ENCODE measurements at regions of chr16 and their contacts with region 1.

Region 1: GRCh38 chr16:57316390-57317017 is 32.0 kb upstream of the PLLP start:
- DNase-seq: peak; percentile 60 to 90
- H3K4me3 ChIP-seq: no peak overlapping the region
- H3K27ac ChIP-seq: peak overlapping the region; percentile 91 to 96
- H3K4me1 ChIP-seq: peaks cover 21 to 41% of the 10 kb centered on the region in 2 donors
- H3K27me3 ChIP-seq: no peaks in the 10 kb centered on the region
- CTCF ChIP-seq: no peak

Region 2: DNA sequence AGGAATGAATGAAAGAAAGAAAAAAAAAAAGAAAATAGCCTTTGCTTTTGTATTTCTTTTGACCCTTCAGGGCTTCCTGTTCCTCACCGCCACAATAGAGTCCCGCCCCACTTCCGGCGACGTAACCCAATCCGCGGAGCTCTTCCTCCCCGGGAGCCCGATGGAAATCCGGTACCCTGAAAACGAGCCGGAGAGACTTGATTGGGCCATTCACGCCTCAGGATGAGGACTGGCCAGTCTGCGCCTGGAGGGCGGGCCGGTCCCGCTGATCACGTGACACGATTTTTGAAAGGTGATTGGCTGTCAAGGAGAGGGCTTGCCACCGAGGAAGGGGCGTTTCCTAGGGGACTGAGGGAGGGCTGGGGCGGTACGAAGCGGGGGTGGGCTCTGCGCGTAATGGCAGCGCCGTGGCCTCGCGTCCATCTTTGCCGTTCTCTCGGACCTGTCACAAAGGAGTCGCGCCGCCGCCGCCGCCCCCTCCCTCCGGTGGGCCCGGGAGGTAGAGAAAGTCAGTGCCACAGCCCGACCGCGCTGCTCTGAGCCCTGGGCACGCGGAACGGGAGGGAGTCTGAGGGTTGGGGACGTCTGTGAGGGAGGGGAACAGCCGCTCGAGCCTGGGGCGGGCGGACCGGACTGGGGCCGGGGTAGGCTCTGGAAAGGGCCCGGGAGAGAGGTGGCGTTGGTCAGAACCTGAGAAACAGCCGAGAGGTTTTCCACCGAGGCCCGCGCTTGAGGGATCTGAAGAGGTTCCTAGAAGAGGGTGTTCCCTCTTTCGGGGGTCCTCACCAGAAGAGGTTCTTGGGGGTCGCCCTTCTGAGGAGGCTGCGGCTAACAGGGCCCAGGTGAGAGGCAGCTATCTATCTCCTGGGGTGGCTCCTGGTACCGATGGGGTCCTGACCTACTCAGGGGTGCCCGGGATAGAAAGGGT is 130.3 kb before region 1 on chr16 and contains the starts of genes PSME3IP1 and RSPRY1:
- intact Hi-C with region 1: no loop called
- DNase-seq: peak; percentile 98 to 99
- H3K4me3 ChIP-seq: peak within 1 kb of the TSS; percentile 78 to 94
- H3K27ac ChIP-seq: peak within 1 kb of the TSS; percentile 95 to 96
- H3K4me1 ChIP-seq: peaks cover 5 to 33% of the 10 kb centered on the region in 2 donors
- H3K27me3 ChIP-seq: no peaks in the 10 kb centered on the region
- CTCF ChIP-seq: no peak
- total RNA-seq, gene PSME3IP1: 32.6 TPM
- total RNA-seq, gene RSPRY1: 29.3 TPM

Region 3: DNA sequence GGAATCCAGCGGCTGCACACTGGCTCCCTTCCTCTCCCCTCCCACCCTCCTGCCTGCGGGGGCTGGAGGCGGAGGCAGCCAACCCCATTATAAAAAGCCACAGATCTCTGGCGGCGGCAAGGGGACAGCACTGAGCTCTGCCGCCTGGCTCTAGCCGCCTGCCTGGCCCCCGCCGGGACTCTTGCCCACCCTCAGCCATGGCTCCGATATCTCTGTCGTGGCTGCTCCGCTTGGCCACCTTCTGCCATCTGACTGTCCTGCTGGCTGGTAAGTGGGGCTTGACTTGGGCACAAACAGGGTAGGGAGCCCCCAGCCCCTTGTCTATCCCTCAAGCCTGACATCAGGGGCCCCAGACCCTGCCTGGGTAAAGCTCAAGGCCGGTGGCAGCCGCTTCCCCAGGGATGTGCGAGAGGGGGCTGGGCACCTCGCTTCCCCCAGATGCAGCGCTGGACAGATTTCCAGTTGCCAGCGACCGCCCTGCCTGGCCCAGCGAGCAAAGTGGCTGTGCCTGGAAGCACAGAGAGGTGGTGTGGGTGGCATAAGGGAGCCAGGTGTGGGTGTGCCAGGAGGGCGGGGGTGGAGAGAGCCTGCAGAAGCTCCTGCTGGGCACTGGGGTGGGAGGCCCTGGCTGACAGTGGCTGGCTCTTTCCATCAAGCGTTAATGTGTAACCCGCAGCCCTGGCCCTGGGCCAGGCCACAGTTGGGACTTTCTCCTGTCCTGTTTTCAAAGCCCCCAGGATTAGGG is 56.0 kb after region 1 on chr16 and contains the start of gene CX3CL1:
- intact Hi-C with region 1: loop called (anchors 1 kb)
- DNase-seq: peak in 1 of 2 donors; percentile 95
- H3K4me3 ChIP-seq: peak within 1 kb of the TSS; percentile 75 to 76
- H3K27ac ChIP-seq: peak within 1 kb of the TSS; percentile 94 to 99
- H3K4me1 ChIP-seq: peaks cover 16 to 37% of the 10 kb centered on the region in 2 donors
- H3K27me3 ChIP-seq: no peaks in the 10 kb centered on the region
- CTCF ChIP-seq: peak; percentile 20 to 56 (median 48)
- total RNA-seq, gene CX3CL1: 251 TPM

Region 4: DNA sequence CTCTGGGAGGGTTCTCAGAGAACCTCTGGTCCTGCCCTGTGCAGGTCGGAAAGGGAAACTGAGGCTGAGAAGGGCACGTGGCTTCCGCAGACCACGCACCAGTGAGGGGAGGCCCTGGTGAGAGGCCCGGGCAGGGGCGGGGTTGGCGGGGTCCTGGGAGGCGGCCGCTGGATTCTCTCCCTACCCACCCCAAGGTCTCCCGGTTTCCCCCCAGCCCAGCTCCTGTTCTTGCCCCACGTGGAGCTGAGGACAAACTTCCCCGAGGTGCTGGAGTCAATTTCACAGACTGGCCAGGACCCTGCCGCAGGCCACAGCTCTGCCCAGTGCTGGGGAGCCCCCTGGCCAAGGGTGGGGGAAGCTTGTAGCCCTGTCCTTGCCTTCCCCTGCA is 99.6 kb after region 1 on chr16:
- intact Hi-C with region 1: loop called (anchors 5 kb)
- DNase-seq: no peak
- H3K4me3 ChIP-seq: no peak overlapping the region
- H3K27ac ChIP-seq: no peak overlapping the region
- H3K4me1 ChIP-seq: peaks cover 3 to 26% of the 10 kb centered on the region in 2 donors
- H3K27me3 ChIP-seq: no peaks in the 10 kb centered on the region
- CTCF ChIP-seq: no peak

Region 5: GRCh38 chr16:57576429-57576870 is 259.9 kb after region 1 on chr16:
- intact Hi-C with region 1: no loop called
- DNase-seq: peak in 1 of 2 donors; percentile 86
- H3K4me3 ChIP-seq: no peak overlapping the region
- H3K27ac ChIP-seq: no peak overlapping the region
- H3K4me1 ChIP-seq: no peaks in the 10 kb centered on the region
- H3K27me3 ChIP-seq: no peaks in the 10 kb centered on the region
- CTCF ChIP-seq: peak; percentile 68 to 92 (median 84)